ENCODE measurements at regions of chr7 and their contacts with region 1.

Region 1: DNA sequence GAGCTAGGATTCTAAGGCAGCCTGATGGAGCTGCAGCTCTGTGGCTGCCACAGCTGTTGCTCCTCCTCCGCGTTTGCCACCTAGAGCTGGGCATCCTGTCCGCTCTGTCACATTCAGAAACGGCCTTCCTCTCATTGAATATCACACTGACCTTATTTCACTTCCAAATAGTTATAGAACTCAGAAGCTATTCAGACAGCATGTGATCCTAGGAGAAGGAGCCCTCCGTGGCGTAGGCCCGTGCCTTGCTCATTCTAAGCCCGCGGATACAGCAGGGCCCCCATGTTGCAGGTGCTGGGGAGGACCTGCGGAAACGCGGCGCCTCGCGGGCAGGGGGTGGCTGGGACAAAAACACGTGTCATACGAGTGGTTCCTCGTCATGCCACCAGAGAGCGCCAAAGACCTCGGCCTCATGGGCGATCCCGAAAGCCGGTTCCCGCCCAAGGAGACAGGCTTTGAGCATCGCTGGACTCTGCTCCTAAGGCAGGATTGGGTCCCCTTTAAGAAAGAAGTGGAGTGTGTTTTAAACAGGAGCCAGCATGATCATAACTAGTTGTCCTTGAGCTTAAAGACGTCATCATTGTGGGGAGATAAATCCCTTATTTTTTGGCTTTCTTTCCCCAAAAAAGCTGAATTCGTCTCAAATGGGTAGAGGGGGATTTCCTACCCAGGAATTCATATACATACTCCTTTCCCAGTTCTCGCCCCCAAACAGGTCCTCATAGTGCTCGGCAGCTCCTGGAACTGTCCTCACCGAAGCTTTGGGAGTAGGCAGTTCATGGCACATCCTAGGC is 17.9 kb upstream of the FIGNL1 start:
- DNase-seq: peak; percentile 78
- H3K4me3 ChIP-seq: no peak overlapping the region
- H3K27ac ChIP-seq: no peak overlapping the region
- H3K4me1 ChIP-seq: no peaks in the 10 kb centered on the region
- H3K27me3 ChIP-seq: no peaks in the 10 kb centered on the region
- CTCF ChIP-seq: peak; percentile 82

Region 2: DNA sequence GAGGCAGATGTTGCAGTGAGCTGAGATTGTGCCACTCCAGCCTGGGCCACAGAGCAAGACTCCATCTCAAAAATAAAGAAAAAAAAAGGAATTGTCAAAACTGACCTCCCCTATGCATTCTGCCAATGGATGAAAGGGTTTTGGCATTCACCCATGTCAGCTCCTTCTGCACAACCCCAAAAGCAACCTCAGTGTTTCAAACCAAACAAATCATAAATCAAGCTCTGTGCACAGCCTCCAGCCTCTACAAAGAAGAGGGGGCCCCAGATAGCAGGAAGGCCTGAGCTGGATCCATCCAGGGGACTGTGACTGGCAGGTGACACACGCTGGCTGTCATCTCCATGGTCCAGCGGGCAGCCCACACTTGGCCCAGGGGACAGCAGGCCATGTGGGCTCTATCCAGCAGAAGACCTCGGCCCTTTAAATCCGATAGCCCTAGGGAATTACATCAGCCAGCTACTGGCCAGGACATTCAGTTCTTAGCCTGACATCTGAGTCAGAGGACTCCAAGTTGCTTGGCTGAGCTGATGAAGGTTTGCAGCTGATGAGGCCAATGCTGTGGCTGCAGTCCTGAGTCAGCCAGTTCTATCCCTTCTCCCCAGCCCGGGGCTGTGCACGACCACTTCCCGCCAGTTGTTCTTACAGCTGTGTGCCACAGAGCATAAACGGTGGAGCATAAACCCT is 34.1 kb after region 1 on chr7:
- CTCF ChIA-PET with region 1: no interaction called
- POLR2A ChIA-PET with region 1: no interaction called
- intact Hi-C with region 1: no loop called
- DNase-seq: no peak
- H3K4me3 ChIP-seq: no peak overlapping the region
- H3K27ac ChIP-seq: no peak overlapping the region
- H3K4me1 ChIP-seq: no peaks in the 10 kb centered on the region
- H3K27me3 ChIP-seq: peaks cover 9% of the 10 kb centered on the region
- CTCF ChIP-seq: no peak

Region 3: GRCh38 chr7:50632561-50633413 is 164.8 kb after region 1 on chr7:
- CTCF ChIA-PET with region 1: no interaction called
- POLR2A ChIA-PET with region 1: no interaction called
- intact Hi-C with region 1: loop called (anchors 1 kb)
- DNase-seq: peak; percentile 62
- H3K4me3 ChIP-seq: no peak overlapping the region
- H3K27ac ChIP-seq: no peak overlapping the region
- H3K4me1 ChIP-seq: no peaks in the 10 kb centered on the region
- H3K27me3 ChIP-seq: no peaks in the 10 kb centered on the region
- CTCF ChIP-seq: peak; percentile 89

Region 4: DNA sequence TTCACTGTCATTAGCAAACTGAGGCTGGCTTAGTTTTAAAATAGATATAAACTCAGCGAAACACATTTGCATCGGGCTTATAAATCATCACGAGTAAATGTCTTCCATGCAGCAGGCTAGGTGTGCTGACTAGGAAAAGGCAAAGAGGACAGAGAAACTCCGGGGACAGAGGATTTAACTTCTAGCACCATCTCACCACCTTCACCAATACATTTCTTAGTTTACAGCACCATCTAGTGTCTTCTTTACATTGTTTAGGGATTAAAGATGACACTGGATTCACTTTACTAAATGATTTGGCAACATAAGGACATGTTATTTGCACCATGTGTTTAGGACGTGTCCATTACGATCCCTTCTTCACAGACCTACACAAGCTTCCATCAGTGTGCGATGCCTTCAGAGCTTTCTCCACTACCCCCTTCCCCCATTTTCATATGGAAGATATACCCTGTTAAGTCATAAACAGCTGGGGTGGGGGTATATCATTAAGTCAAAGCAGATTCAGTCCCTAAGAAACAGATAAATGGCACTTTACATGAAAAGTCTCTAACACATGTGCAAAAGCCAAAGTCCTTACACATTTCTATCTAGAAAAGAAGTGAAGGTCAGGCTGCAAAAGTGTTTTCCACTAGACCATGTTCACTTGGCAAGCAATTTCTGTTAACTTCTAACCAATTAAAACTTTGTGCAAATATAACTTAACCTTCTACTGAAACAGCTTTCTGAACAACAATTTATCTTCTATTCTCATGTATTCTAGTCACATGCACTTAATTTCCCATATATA is 211.4 kb after region 1 on chr7:
- CTCF ChIA-PET with region 1: no interaction called
- POLR2A ChIA-PET with region 1: no interaction called
- intact Hi-C with region 1: loop called (anchors 5 kb)
- DNase-seq: peak; percentile 55
- H3K4me3 ChIP-seq: no peak overlapping the region
- H3K27ac ChIP-seq: no peak overlapping the region
- H3K4me1 ChIP-seq: no peaks in the 10 kb centered on the region
- H3K27me3 ChIP-seq: peaks cover 11% of the 10 kb centered on the region
- CTCF ChIP-seq: peak; percentile 40; the same call in 1 of the 2 replicates